ENCODE measurements at regions of chr2 and their contacts with region 1.

Region 1: GRCh38 chr2:55073000-55073983 is 23.0 kb upstream of the RTN4 start:
- DNase-seq: no peak
- ATAC-seq: no peak
- H3K4me3 ChIP-seq: no peak overlapping the region
- H3K27ac ChIP-seq: no peak overlapping the region
- H3K4me1 ChIP-seq: no peaks in the 10 kb centered on the region
- H3K27me3 ChIP-seq: no peaks in the 10 kb centered on the region
- CTCF ChIP-seq: no peak

Region 2: GRCh38 chr2:55144922-55145820 is 71.9 kb after region 1 on chr2:
- CTCF ChIA-PET with region 1: no interaction called
- POLR2A ChIA-PET with region 1: interaction called, 10 read pairs
- in situ Hi-C with region 1: no loop called
- intact Hi-C with region 1: no loop called
- DNase-seq: no peak
- ATAC-seq: no peak
- H3K4me3 ChIP-seq: no peak overlapping the region
- H3K27ac ChIP-seq: no peak overlapping the region
- H3K4me1 ChIP-seq: no peaks in the 10 kb centered on the region
- H3K27me3 ChIP-seq: no peaks in the 10 kb centered on the region
- CTCF ChIP-seq: no peak